Panc1 (cell line): ENCODE measurements at regions of chr1 and their contacts with region 1.

Region 1: DNA sequence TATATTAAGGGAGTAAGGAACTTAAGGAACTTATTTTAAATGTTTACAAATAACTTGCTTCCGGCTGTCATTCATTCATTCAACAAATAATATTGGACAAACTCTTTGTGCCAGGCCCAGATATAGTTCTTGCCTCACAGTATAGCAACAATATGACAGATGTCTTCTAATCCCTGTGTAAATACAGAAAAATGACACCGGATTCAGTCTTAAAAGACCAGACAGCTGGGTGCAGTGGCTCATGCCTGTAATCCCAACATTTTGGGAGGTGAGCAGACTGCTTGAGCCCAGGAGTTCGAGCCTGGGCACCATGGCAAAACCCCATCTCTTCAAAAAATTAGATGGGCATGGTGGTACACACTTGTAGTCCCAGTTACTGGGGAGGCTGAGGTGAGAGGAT is 23.7 kb downstream of the EIF2B3 start:
- DNase-seq: no peak
- ATAC-seq: no peak
- H3K4me3 ChIP-seq: no peak overlapping the region
- H3K27ac ChIP-seq: no peak overlapping the region
- H3K4me1 ChIP-seq: no peaks in the 10 kb centered on the region
- H3K27me3 ChIP-seq: no peaks in the 10 kb centered on the region
- CTCF ChIP-seq: no peak

Region 2: GRCh38 chr1:44919400-44919799 is 43.3 kb before region 1 on chr1:
- CTCF ChIA-PET with region 1: interaction called, 11 read pairs
- POLR2A ChIA-PET with region 1: no interaction called
- in situ Hi-C with region 1: no loop called
- intact Hi-C with region 1: no loop called
- DNase-seq: no peak
- ATAC-seq: no peak
- H3K4me3 ChIP-seq: no peak overlapping the region
- H3K27ac ChIP-seq: no peak overlapping the region
- H3K4me1 ChIP-seq: no peaks in the 10 kb centered on the region
- H3K27me3 ChIP-seq: no peaks in the 10 kb centered on the region
- CTCF ChIP-seq: no peak